Activated naive CD4-positive, alpha-beta T cell treated with anti-CD3 and anti-CD28 coated beads, Interleukin-2, amount 10 ng/mL, durations not matched to agents 7 days and 5 days (primary cell): ENCODE measurements at regions of chr18 and their contacts with region 1.

Region 1: DNA sequence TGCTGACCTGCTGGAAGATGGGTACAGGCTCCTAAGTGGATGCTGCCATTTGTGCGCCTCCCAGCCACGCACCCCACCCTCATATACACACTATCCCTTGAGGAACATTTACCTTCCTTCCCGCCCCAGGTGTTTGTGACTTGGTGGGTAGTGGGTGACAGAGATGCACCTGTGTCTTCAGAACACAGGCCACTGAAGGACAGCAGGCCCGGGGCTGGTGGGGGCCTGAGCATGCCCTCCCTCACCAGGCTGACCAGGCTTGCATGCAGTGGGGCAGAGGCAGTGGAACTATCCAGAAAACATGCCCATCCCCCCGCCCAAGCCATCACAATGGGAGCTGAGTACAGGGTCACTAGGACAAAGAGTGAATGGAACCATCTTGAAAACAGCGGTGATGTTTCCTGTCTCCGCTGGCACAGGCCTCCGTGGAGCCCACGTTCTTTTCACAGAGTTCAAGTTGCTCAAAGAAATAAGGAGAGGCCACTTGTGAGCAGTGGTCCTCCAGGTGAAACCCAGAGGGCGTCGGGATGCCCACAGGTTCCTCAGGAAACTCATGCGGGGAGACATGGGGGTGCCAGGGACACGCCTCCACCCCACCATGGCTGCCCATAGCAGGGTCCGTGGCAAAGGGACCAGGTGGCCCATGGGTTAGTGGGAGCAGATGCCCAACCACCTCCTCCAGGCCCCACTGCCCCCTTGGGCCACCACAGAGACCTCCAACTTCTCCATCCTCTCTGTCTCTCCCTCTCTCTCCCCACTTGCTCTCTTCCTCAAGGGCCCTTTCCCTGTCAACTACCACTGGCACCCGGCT is 90.9 kb downstream of the MALT1 start:
- DNase-seq: no peak
- H3K4me3 Mint-ChIP-seq: no peak overlapping the region
- H3K27ac Mint-ChIP-seq: no peak overlapping the region
- H3K4me1 Mint-ChIP-seq: peaks cover 46% of the 10 kb centered on the region
- H3K27me3 Mint-ChIP-seq: peaks cover 63% of the 10 kb centered on the region

Region 2: DNA sequence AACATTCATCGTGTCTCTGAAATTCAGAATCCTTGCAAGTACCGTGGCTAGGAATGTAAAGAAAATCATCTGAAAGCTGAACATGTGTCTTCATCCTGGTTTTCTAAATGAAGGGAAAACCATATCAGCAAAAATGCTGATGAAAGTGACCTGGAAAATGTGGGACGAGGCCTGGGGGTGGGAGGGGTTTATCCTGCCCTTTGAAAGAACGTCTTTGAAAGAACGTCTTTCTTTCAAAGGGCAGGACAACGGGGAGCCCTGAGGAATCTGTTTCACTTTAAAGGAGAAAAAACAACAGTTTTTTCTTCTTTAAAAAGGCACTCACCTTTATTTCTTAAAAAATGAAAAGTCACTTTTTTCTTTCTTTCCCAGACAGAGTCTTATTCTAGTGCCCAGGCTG is 318.5 kb before region 1 on chr18:
- CTCF ChIA-PET with region 1: no interaction called
- DNase-seq: no peak
- H3K4me3 Mint-ChIP-seq: no peak overlapping the region
- H3K27ac Mint-ChIP-seq: no peak overlapping the region
- H3K4me1 Mint-ChIP-seq: peaks cover 6% of the 10 kb centered on the region
- H3K27me3 Mint-ChIP-seq: peaks cover 19% of the 10 kb centered on the region

Region 3: DNA sequence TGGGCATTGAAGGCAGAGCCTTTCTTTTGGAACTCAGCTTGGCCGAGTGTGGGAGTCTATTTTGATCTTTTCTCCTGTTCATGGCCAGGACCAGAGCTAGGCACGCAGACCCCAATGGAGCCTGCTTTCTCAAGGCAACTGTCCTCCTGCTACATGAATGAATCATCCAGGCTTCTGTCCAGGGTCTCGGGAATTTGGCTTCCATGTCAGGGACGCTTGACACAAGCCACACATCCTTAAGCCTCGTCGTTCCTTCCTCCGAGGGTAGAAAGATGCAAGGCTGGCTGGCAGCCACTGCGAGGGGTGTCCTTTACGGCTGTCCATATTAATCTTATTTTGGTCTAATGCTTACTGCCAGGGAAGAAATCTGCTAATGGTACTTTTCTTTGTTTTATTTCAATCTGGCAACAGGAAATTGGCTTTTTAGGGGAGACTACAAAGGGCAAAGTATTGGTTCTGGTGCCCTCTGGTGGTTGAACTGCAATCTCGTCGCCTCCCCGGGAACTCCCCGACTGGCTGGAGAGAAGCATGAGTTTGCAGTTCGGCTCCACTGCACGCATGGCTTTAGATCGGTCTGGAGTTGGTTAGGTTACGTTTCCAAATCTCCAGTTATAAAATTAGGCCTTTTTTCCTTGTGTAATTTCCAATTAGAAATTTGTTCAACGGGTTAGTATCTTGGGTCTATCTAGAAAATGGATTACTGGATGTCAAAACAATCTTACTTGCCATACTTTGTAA is 268.5 kb before region 1 on chr18:
- CTCF ChIA-PET with region 1: interaction called, 30 read pairs
- DNase-seq: peak; percentile 83
- H3K4me3 Mint-ChIP-seq: no peak overlapping the region
- H3K27ac Mint-ChIP-seq: no peak overlapping the region
- H3K4me1 Mint-ChIP-seq: peaks cover 7% of the 10 kb centered on the region
- H3K27me3 Mint-ChIP-seq: peaks cover 63% of the 10 kb centered on the region

Region 4: GRCh38 chr18:58501066-58501896 is 260.9 kb before region 1 on chr18:
- CTCF ChIA-PET with region 1: interaction called, 30 read pairs
- DNase-seq: no peak
- H3K4me3 Mint-ChIP-seq: no peak overlapping the region
- H3K27ac Mint-ChIP-seq: no peak overlapping the region
- H3K4me1 Mint-ChIP-seq: peaks cover 15% of the 10 kb centered on the region
- H3K27me3 Mint-ChIP-seq: peaks cover 24% of the 10 kb centered on the region

Region 5: DNA sequence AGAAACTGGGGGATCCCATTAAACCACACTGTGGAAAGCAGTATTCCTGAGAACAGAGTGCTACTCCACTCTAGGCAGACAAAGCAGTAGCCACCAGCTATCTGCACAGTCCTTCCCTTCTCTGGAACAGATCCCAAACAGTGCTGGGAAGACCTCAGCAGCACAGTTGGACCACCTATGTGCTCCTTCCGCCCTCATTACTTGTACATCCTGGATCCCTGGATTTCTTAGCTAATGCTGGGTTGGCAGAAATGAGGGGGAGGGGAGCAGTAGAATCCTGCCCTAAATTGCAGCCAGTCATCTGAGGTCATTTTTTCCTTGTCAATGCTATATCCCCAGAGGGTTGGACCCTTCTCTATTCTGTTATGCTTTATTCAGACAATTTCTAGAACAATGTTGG is 104.7 kb before region 1 on chr18:
- CTCF ChIA-PET with region 1: interaction called, 10 read pairs
- DNase-seq: no peak
- H3K4me3 Mint-ChIP-seq: peak overlapping the region; percentile 67
- H3K27ac Mint-ChIP-seq: peak overlapping the region; percentile 95
- H3K4me1 Mint-ChIP-seq: peaks cover 83% of the 10 kb centered on the region
- H3K27me3 Mint-ChIP-seq: no peaks in the 10 kb centered on the region

Region 6: DNA sequence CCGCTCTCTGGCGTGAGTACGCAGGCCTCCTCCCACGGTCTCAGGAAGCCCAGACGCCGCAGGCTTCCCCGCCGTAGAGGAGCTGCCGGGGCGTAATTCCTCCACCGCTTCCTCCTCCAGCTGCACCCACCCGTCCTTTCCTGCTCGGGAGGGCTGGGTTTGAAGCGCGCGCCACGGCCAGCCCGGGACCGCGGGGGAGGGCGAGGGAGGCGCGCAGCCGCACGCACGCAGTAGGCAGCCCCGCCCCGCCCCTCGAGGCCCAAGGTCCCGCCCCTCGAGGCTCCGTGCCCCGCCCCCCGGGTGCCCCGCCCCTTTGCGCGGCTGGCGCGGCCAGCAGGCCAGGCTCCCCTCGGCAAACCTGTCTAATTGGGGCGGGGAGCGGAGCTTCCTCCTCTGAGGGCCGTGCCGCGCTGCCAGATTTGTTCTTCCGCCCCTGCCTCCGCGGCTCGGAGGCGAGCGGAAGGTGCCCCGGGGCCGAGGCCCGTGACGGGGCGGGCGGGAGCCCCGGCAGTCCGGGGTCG is 91.0 kb before region 1 on chr18 and contains the start of gene MALT1:
- CTCF ChIA-PET with region 1: interaction called, 24 read pairs
- DNase-seq: peak; percentile 95
- H3K4me3 Mint-ChIP-seq: peak within 1 kb of the TSS; percentile 97
- H3K27ac Mint-ChIP-seq: peak within 1 kb of the TSS; percentile 94
- H3K4me1 Mint-ChIP-seq: peaks cover 63% of the 10 kb centered on the region
- H3K27me3 Mint-ChIP-seq: no peaks in the 10 kb centered on the region